Aorta (tissue), 5 donors: ENCODE measurements at regions of chr10 and their contacts with region 1.

Region 1: DNA sequence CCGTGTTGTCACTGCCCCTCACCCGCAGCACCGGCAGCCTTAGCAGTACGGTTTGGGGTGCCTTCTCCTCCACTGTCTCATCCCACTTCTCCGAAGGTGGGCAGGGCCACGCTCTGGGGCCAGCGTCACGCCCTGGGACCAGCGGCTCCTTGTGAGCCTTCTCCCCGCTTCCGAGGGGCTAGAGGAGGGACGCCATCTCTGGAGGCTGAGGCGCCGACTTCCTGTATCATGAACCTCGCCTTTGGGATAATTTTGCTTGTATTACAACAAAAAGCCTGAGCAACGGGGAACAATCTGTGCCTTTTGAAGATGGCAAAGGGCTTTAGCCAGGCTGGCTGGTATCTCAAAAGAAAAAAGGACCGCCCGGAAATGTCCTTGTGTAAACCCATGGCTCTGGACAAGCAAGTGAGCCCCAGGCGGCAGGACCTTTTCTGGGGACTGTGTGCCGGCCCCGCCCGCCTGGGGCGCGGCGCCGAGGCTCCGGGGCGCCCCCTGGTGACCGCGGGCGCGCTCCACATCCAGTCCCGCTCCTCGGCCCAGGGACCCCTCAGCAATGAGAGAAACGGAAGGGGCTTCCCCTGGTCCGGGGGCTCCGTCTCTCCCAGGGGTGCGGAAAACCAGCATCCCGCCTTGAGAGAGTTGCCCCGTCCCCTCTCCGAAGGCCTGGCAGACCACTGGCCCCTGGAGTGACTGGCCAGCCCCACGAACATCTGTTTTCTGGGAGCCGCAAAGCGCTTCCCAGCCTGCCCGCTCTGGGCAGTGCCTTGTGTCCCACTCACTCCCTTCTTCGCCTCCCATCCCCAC is 3.8 kb downstream of the DEPP1 start:
- DNase-seq: peak; percentile 81 to 90
- ATAC-seq: peak; percentile 75
- H3K4me3 ChIP-seq: peak overlapping the region in 1 of 2 donors; percentile 42
- H3K27ac ChIP-seq: peak overlapping the region in 1 of 2 donors; percentile 95
- H3K4me1 ChIP-seq: peaks cover 0 to 3% of the 10 kb centered on the region in 2 donors
- H3K27me3 ChIP-seq: no peaks in the 10 kb centered on the region

Region 2: GRCh38 chr10:44845361-44846175 is 129.3 kb before region 1 on chr10:
- intact Hi-C with region 1: no loop called
- DNase-seq: no peak
- ATAC-seq: no peak
- H3K4me3 ChIP-seq: no peak overlapping the region
- H3K27ac ChIP-seq: no peak overlapping the region
- H3K4me1 ChIP-seq: no peaks in the 10 kb centered on the region
- H3K27me3 ChIP-seq: no peaks in the 10 kb centered on the region

Region 3: GRCh38 chr10:44878706-44879530 is 95.9 kb before region 1 on chr10:
- intact Hi-C with region 1: loop called in 1 of 2 experiments (anchors 10 kb)
- DNase-seq: peak; percentile 92 to 95
- ATAC-seq: peak; percentile 92
- H3K4me3 ChIP-seq: no peak overlapping the region
- H3K27ac ChIP-seq: no peak overlapping the region
- H3K4me1 ChIP-seq: peaks cover 0 to 4% of the 10 kb centered on the region in 2 donors
- H3K27me3 ChIP-seq: no peaks in the 10 kb centered on the region

Region 4: DNA sequence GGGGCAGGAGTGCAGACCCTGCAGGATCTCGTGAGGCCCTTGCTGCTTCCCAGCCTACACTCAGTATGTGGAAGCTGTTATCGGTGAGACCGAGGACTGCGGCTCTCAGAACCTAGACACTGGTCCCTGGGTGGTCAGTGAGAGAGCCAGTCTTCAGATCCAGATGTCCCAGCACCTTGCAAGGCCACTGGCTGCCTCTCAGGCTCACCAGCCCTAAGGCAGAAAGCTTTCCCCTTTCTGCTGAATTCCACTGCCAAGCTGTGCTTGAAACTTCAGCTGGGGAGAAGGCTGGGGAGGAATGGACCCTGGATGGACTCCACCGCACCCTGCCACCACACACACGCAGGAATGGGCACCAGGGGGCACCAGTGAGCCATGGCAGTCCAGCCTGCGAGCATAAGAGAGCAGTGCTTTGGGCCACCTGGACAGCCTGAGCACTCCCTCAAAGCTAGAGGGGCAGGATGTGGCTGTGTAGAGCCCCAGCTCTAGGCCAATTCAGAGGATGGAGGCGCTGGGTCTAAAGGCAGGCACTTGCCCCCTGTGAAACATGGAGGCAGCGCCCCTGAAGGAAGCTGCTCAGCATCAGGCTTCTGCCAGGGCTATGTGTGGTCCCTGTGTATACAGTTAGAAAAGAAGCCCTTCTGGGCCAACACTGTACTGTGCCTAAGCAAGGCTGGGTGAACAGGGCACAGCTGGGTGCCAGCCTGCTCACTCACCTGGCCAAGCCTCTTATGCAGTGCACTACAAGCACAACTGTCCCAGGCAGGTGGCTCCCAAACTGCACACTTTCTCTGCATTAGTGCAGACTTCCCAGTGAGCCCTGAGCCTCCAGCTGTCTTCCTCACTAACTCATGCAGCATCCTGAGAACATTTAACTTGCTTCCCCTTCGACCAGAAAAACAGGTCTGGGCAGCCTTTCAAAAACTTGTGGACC is 42.0 kb before region 1 on chr10:
- intact Hi-C with region 1: loop called (anchors 1 to 2 kb)
- DNase-seq: peak; percentile 93 to 99
- ATAC-seq: peak; percentile 92
- H3K4me3 ChIP-seq: no peak overlapping the region
- H3K27ac ChIP-seq: no peak overlapping the region
- H3K4me1 ChIP-seq: peaks cover 0 to 3% of the 10 kb centered on the region in 2 donors
- H3K27me3 ChIP-seq: no peaks in the 10 kb centered on the region